T-cell (primary cell): ENCODE measurements at regions of chr6 and their contacts with region 1.

Region 1: DNA sequence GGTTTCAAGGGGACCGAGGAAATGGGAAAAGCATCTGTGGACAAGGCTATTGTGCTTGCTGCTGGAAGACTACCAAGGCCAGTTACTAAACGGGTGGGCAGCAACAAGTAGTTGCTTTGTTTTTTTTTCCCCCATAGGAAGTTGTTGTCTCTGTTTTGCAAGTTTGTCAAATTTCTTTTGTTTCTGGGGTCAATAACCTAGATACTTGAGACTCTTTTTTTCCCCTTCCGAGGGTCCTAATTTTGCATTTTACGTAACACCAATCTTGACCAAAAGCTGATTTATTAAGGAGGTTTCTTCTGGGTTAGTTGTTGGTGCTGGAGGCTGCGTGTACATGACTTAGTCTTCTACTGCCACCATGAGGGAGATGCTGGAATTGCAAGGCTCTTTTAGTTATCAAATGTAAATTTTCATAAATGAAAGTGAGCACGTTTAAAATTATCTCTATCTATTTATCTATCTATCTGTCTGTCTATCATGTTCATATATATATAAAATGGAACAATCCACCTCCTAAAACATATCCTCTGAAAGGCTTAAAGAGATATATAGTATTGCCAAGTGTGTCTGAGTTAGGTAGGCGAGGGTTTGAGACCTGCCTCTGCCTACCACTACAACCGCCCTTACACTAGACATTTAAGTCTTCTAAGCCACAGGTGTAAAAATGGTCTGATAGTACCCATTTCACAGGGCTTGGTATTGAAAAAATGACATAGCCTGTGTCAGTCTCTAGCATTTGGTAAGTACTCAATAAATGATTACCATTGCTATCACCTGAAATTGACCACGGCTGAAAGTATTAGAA is 60.2 kb downstream of the GCLC start:
- DNase-seq: peak in 33 of 35 experiments; percentile 19 to 85 (median 61)
- ATAC-seq: peak in 2 of 4 experiments; percentile 47 to 63
- H3K4me3 ChIP-seq: no peak overlapping the region
- H3K4me3 Mint-ChIP-seq: no peak overlapping the region
- H3K27ac ChIP-seq: no peak overlapping the region
- H3K27ac Mint-ChIP-seq: no peak overlapping the region
- H3K4me1 ChIP-seq: no peaks in the 10 kb centered on the region
- H3K4me1 Mint-ChIP-seq: peaks cover 0 to 20% (median 7%) of the 10 kb centered on the region in 3 donors
- H3K27me3 ChIP-seq: peaks cover 0 to 4% of the 10 kb centered on the region in 2 experiments
- H3K27me3 Mint-ChIP-seq: peaks cover 21 to 46% of the 10 kb centered on the region in 2 donors

Region 2: GRCh38 chr6:53603386-53604116 is 118.9 kb after region 1 on chr6:
- CTCF ChIA-PET with region 1: interaction called in 1 of 2 experiments, 10 read pairs
- POLR2A ChIA-PET with region 1: no interaction called
- DNase-seq: no peak
- ATAC-seq: no peak
- H3K4me3 ChIP-seq: no peak overlapping the region
- H3K4me3 Mint-ChIP-seq: no peak overlapping the region
- H3K27ac ChIP-seq: no peak overlapping the region
- H3K27ac Mint-ChIP-seq: no peak overlapping the region
- H3K4me1 ChIP-seq: no peaks in the 10 kb centered on the region
- H3K4me1 Mint-ChIP-seq: no peaks in the 10 kb centered on the region
- H3K27me3 ChIP-seq: peaks cover 0 to 5% of the 10 kb centered on the region in 2 experiments
- H3K27me3 Mint-ChIP-seq: peaks cover 3 to 4% of the 10 kb centered on the region in 2 donors